T-cell (primary cell): ENCODE measurements at regions of chr5 and their contacts with region 1.

Region 1: DNA sequence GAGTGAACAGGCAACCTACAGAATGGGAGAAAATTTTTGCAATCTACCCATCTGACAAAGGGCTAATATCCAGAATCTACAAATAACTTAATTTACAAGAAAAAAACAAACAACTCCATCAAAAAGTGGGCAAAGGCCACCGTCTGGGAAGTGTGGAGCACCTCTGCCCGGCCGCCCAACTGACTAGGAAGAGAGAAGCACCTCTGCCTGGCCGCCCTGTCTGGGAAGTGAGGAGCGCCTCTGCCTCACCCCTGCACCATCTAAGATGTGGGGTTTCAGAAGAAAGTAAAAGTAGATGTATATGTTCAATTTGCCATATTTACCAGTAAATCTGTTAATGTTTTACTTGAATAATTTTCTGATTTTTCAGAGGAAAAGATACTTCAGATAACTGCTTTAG is 108.1 kb upstream of the TMEM161B start:
- DNase-seq: no peak
- ATAC-seq: no peak
- H3K4me3 ChIP-seq: no peak overlapping the region
- H3K4me3 Mint-ChIP-seq: no peak overlapping the region
- H3K27ac ChIP-seq: no peak overlapping the region
- H3K27ac Mint-ChIP-seq: no peak overlapping the region
- H3K4me1 ChIP-seq: no peaks in the 10 kb centered on the region
- H3K4me1 Mint-ChIP-seq: peaks cover 0 to 6% (median 0%) of the 10 kb centered on the region in 3 donors
- H3K27me3 ChIP-seq: no peaks in the 10 kb centered on the region
- H3K27me3 Mint-ChIP-seq: peaks cover 6 to 13% of the 10 kb centered on the region in 2 donors

Region 2: DNA sequence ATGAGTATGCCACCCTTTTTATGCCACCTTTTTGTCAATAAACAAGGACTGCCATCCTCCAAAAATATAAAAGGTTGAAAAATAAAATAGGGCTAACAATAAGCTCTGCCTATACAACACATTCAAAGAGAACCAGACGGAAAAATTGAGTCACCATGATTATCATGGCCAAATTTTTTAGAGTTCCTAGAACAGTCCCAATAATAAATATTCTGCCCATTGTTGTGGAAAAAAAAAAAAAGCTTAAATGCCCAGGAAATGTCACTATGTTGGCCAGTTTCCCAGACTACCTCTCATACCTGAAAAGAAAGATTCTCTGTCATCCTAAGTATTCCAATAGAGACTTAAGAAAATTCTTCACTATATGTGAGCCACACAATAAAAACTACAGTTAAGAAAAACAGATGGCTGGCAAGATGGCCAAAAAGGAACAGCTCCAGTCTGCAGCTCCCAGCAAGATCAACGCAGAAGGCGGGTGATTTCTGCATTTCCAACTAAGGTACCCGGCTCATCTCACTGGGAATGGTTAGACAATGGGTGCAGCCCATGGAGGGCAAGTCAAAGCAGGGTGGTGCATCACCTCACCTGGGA is 257.1 kb before region 1 on chr5:
- CTCF ChIA-PET with region 1: interaction called in 1 of 2 experiments, 10 read pairs
- POLR2A ChIA-PET with region 1: no interaction called
- DNase-seq: no peak
- ATAC-seq: no peak
- H3K4me3 ChIP-seq: no peak overlapping the region
- H3K4me3 Mint-ChIP-seq: no peak overlapping the region
- H3K27ac ChIP-seq: no peak overlapping the region
- H3K27ac Mint-ChIP-seq: no peak overlapping the region
- H3K4me1 ChIP-seq: no peaks in the 10 kb centered on the region
- H3K4me1 Mint-ChIP-seq: no peaks in the 10 kb centered on the region
- H3K27me3 ChIP-seq: peaks cover 0 to 10% of the 10 kb centered on the region in 2 experiments
- H3K27me3 Mint-ChIP-seq: peaks cover 30 to 47% of the 10 kb centered on the region in 2 donors